ENCODE measurements at regions of chr22 and their contacts with region 1.

Region 1: GRCh38 chr22:20671409-20672081 is 102.4 kb upstream of the SERPIND1 start:
- DNase-seq: no peak
- ATAC-seq: no peak

Region 2: DNA sequence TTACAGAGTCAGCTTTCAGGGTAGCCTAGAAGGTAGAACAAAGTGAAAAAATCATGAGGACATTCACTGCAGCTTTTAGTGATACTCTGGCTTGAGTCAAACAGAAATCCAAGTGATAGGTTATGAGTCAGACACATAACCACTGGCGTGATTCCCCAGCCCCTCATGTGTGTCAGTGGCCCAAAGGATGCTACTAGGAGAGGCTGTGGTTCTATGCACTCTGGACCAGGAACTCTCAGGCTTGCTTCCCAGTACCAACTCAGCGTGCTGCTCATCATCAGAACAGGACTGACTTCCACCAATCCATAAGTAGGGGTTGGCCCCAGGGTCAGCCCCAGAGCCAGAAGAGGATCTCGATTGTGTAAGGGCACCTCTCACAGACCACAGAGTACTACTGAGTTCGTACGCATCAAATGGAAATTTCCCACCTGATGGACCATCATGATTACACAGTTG is 47.4 kb before region 1 on chr22:
- intact Hi-C with region 1: loop called (anchors 10 kb)
- DNase-seq: no peak
- ATAC-seq: no peak

Measured in Right ventricle myocardium superior (tissue), 1 donor.